ENCODE measurements at regions of chr5 and their contacts with region 1.

Region 1: DNA sequence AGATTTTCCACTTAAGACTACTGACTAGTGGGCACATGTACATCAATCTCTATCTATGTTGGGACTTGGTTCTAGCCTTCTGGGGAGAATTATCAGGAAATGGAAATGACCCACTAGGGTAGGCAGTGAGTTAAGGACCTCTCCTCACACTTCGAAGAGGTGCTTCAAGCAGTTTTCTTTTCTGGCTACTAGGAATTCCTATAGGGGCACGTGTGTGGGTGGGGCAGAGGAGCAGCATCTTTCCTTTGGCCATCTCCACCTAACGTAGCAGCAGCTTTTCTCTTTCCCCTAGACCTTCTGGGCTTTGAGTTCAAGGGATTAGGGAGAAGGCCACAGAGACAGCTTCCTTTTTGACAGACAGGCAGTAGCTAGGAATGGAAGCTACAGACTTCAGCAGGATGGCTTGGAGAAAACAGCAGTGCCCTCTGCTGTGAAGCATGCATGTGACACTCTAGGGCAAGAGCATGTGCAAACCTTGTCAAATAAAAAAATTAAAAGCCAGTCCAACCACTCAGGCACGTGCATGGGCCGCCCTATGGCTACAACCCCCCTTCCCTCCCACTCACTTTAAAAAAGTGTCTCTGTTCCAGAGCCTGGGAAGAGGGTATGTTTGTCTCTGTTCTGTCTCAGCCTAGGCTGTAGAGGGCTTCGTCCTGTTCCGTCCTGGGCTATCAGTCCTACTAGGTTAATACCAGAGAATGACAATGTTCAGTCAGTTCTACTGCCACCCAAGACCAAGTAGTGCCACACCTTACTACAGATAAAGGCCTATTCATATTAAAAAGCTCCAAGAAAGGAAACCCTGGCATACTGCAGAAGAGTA is 8.7 kb upstream of the GFRA3 start:
- DNase-seq: peak; percentile 20
- H3K4me3 ChIP-seq: no peak overlapping the region
- H3K27ac ChIP-seq: no peak overlapping the region
- H3K27me3 ChIP-seq: no peaks in the 10 kb centered on the region
- CTCF ChIP-seq: peak; percentile 68

Region 2: GRCh38 chr5:138305797-138306196 is 22.7 kb after region 1 on chr5:
- CTCF ChIA-PET with region 1: interaction called, 13 read pairs
- POLR2A ChIA-PET with region 1: no interaction called
- DNase-seq: no peak
- H3K4me3 ChIP-seq: no peak overlapping the region
- H3K27ac ChIP-seq: no peak overlapping the region
- H3K27me3 ChIP-seq: no peaks in the 10 kb centered on the region
- CTCF ChIP-seq: no peak

Region 3: GRCh38 chr5:138425079-138425478 is 141.9 kb after region 1 on chr5:
- CTCF ChIA-PET with region 1: no interaction called
- POLR2A ChIA-PET with region 1: no interaction called
- DNase-seq: no peak
- H3K4me3 ChIP-seq: no peak overlapping the region
- H3K27ac ChIP-seq: no peak overlapping the region
- H3K27me3 ChIP-seq: no peaks in the 10 kb centered on the region
- CTCF ChIP-seq: no peak